Activated CD4-positive, alpha-beta T cell treated with anti-CD3 and anti-CD28 coated beads for 36 hours (primary cell): ENCODE measurements at regions of chr3 and their contacts with region 1.

Region 1: GRCh38 chr3:72134989-72135451 is 350.1 kb upstream of the PROK2 start:
- DNase-seq: peak; percentile 16
- ATAC-seq: peak; percentile 62
- H3K4me3 Mint-ChIP-seq: peak overlapping the region; percentile 54
- H3K27ac Mint-ChIP-seq: peak overlapping the region; percentile 85
- H3K4me1 Mint-ChIP-seq: peaks cover 48% of the 10 kb centered on the region
- H3K27me3 Mint-ChIP-seq: peaks cover 2% of the 10 kb centered on the region

Region 2: DNA sequence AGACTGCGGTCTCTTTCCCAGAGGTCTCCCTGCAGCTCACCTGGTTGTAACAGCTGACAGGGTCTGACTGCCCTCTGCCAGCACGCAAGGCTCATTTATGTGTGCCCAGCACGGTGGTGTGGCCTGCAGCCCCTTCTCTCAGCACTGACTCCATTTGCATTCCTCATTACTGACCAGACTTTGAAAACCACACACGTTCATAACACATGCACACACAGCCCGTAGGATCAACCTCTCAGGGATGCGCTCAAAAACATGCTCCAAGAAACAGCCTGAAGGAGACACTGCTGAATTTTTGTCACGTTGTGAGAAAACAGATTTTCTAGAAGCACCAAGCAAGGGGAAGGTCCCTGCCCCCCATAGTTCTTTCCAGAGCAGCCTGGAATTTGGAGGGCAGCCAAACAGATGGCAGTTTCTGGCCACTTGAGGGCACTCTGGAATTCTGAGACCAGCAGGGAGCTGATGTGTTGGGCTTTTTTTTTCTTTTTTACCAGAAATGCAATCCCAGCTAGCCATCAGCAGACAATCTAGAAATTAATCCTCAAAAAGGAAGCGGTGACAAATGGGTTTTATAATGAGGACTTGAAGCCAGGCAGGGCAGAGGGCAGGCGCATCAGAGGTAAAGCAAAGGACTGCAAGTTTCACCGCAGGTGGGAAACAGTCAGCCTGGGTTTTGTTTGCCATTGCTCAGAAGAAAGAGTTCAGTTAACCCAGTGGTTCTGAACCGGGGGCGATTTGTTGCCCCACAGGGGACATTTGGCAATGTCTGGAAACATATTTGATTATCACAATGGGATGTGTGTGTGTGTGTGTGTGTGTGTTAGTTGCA is 179.6 kb before region 1 on chr3:
- CTCF ChIA-PET with region 1: no interaction called
- POLR2A ChIA-PET with region 1: no interaction called
- intact Hi-C with region 1: loop called in 1 of 2 experiments (anchors 5 kb)
- DNase-seq: peak; percentile 72
- ATAC-seq: peak; percentile 80
- H3K4me3 Mint-ChIP-seq: no peak overlapping the region
- H3K27ac Mint-ChIP-seq: peak overlapping the region; percentile 55
- H3K4me1 Mint-ChIP-seq: peaks cover 35% of the 10 kb centered on the region
- H3K27me3 Mint-ChIP-seq: peaks cover 2% of the 10 kb centered on the region

Region 3: GRCh38 chr3:72100601-72101187 is 34.3 kb before region 1 on chr3:
- CTCF ChIA-PET with region 1: interaction called, 5 read pairs
- POLR2A ChIA-PET with region 1: no interaction called
- intact Hi-C with region 1: loop called (anchors 1 kb)
- DNase-seq: peak; percentile 96
- ATAC-seq: peak; percentile 93
- H3K4me3 Mint-ChIP-seq: peak overlapping the region; percentile 70
- H3K27ac Mint-ChIP-seq: peak overlapping the region; percentile 90
- H3K4me1 Mint-ChIP-seq: peaks cover 28% of the 10 kb centered on the region
- H3K27me3 Mint-ChIP-seq: peaks cover 15% of the 10 kb centered on the region

Region 4: DNA sequence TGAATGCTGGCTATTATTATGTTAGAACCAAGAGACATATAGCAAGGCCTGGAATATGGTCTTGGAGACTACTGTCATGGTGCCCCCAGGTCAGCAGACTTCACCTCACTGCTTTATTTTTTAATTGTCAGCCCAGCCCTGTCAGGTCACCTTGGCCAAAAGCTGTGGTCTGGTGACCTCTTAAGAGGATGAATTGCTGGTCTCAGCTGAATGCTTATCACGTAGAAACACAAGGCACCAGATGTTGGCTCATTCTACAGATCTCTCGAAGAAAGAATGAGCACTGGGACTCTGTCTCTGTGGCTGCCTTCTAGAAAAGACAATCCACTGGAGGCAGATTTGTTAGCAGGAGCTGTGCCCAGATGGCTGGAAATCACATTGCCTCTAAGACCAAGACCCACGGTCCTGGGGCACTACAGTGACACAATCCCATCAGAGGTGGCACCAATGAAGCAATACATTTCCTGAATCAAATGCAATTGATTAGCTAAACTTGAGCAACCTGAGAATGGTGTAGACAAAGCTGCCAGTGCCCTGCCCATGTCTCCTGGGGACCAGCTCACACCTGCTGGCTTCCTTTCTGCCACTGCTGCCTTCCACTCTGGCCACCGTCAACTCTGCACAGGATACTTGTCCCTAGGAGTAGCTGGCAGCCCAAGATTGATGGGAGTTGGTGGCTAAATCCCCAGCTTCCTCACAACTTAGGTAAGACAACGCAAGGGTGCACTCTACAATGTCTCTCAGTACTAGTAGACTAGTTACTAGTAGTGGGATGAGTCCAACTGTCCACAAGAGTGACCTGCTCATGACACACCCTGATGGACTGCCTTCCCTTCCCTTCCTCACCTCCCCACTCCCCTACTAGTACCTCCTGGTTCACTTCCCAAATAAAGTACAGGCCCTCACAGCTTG is 34.8 kb after region 1 on chr3:
- CTCF ChIA-PET with region 1: no interaction called
- POLR2A ChIA-PET with region 1: no interaction called
- intact Hi-C with region 1: no loop called
- DNase-seq: no peak
- ATAC-seq: no peak
- H3K4me3 Mint-ChIP-seq: no peak overlapping the region
- H3K27ac Mint-ChIP-seq: no peak overlapping the region
- H3K4me1 Mint-ChIP-seq: no peaks in the 10 kb centered on the region
- H3K27me3 Mint-ChIP-seq: peaks cover 2% of the 10 kb centered on the region

Region 5: DNA sequence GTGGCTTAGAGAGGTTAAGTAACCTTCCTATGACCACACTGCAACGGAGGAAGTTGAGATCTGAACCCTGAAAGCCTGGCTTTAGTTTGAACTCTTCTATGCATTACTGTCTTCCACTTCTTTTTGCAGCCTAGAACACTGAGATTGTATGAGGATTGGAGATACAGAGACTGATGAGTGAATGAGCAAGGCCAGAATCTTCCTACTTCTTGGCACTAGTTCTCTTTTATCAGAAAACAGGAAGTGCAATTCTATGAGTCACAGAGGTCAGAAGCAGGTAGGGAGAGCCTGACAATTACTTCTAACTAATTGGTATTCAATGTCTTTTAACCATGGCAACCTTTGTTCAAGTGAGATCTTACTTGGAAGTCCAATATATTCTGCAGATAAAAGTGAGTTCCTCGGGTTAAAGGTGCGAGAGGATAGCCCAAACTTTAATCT is 494.2 kb after region 1 on chr3:
- CTCF ChIA-PET with region 1: interaction called, 3 read pairs
- POLR2A ChIA-PET with region 1: no interaction called
- intact Hi-C with region 1: loop called in 1 of 2 experiments (anchors 2 kb)
- DNase-seq: no peak
- ATAC-seq: peak; percentile 67
- H3K4me3 Mint-ChIP-seq: no peak overlapping the region
- H3K27ac Mint-ChIP-seq: peak overlapping the region; percentile 79
- H3K4me1 Mint-ChIP-seq: peaks cover 60% of the 10 kb centered on the region
- H3K27me3 Mint-ChIP-seq: no peaks in the 10 kb centered on the region

Region 6: GRCh38 chr3:73052857-73053256 is 917.8 kb after region 1 on chr3:
- CTCF ChIA-PET with region 1: no interaction called
- POLR2A ChIA-PET with region 1: no interaction called
- intact Hi-C with region 1: no loop called
- DNase-seq: no peak
- ATAC-seq: no peak
- H3K4me3 Mint-ChIP-seq: no peak overlapping the region
- H3K27ac Mint-ChIP-seq: no peak overlapping the region
- H3K4me1 Mint-ChIP-seq: peaks cover 26% of the 10 kb centered on the region
- H3K27me3 Mint-ChIP-seq: no peaks in the 10 kb centered on the region